Left cardiac atrium (tissue), 4 donors: ENCODE measurements at regions of chr12 and their contacts with region 1.

Region 1: GRCh38 chr12:111519083-111519482 is 80.0 kb downstream of the ATXN2 start:
- DNase-seq: no peak
- ATAC-seq: peak; percentile 17 to 19

Region 2: GRCh38 chr12:111430433-111431353 is 88.4 kb before region 1 on chr12:
- intact Hi-C with region 1: no loop called
- DNase-seq: no peak
- ATAC-seq: no peak

Region 3: DNA sequence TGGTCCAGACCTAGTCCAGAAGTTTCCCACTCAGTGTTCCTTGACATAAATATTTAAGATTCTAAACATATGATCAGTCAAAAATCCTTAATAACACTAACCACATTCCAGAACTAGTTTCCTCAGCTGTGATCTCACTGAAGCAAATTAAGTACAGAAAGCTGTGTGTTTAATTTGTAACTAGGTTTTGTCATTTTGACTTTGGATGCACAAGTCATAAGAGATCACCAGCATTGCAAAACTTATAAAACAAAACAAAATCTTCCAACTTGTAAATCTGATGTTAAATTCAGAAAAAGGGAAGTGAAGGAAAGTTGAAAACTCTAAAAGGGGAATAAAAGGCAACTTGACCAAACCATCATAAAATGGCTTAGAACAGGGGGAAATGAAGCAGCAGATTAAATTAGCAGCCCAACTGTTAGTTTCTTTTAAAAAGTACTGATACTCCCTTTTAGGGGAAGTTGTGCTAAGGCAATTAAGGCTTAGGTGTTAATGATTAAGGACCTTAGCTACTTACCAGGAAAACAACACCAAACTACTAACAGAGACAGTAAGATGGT is 56.8 kb before region 1 on chr12:
- intact Hi-C with region 1: loop called in 1 of 2 experiments (anchors 10 kb)
- DNase-seq: no peak
- ATAC-seq: no peak

Region 4: DNA sequence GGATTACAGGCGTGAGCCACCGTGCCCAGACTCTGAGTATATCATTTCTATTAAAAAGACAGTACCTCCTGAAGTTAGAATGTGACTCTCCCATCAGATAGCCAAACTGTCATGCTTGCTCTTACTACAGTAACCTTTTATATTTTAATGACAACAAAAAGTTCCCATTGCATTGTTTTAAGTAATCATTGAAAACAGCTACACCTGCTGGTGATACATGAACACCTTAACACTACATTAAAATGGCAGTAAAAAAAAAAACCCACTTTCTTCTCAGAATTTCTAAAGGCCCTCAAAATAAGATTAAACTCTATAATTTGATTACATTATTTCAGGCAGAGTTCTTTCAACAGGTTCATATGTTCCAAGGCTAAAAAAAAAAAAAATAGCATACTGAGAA is 36.6 kb before region 1 on chr12:
- intact Hi-C with region 1: no loop called
- DNase-seq: no peak
- ATAC-seq: no peak

Region 5: DNA sequence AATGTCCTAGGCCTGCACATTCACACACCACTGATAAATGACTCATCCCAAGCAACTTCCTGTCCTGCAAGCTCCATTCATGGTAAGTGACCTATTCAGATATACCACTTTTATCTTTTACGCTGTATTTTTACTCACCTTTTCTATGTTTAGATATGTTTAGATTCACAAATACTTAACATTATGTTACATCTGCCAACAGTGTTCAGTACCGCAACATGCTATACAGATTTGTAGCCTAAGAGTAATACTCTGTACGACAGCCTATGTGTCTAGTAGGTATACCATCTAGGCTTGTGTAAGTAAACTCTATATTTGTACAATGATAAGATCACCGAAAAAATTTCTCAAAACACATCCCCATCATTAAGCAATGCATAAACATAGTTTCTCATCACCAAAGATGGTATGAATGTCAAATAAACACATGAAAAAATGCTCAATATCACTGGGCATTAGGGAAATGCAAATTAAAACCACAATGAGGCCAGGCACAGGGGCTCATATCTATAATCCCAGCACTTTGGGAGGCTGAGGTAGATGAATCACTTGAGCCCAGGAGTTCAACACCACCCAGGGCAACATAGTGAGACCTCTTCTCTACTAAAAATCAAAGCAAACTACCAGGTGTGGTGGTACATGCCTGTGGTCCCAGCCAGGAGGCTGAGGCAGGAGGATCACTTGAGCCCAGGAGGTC is 59.3 kb after region 1 on chr12:
- intact Hi-C with region 1: no loop called
- DNase-seq: no peak
- ATAC-seq: peak in 1 of 2 donors; percentile 70